ENCODE measurements at regions of chr6 and their contacts with region 1.

Region 1: DNA sequence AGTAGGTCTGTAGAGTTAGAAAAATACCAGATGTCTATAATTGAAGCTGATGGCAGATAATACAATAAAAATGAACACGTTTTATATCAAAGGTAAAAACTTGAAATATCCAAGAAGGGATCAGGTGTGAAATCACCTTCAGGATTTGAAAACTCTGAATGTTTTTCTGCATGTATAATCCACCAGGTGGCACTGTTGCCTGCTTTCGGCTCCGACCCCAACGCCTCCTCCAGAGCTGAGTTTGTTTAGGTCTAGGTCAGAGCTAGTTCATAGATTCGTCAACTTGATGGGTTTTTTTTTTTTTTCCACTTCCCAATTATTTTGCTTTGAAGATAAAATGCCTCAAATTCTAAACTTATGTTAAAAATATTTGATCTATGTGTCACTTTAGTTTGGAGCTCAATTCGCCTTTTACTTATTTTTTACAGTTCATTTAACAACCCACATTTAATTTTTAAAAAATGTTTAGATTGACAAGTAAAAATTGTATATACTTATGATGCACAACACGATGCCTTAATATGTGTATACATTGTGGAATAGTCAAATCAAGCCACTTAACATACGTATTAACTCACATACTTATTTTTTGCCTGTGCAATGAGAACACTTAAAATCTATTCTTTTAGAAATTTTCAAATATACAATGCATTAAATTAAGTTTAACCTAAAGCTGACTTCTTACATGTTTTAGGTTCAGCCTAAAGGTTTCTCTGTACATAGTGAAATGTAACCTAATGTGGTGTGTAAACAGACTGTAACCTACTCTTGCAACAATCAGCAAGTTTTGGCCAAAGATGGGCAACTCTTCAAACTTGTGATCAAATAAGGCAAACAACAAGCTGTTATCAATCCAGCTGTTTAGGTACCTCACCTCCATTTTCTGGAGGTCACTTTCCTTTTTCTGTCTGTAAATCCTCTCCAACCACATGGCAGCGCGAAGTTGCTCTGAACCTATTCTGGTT is 39.4 kb upstream of the ENPP4 start:
- DNase-seq: peak; percentile 34 to 52 (median 47)
- H3K4me3 ChIP-seq: no peak overlapping the region
- H3K4me3 Mint-ChIP-seq: no peak overlapping the region
- H3K27ac ChIP-seq: no peak overlapping the region
- H3K27ac Mint-ChIP-seq: no peak overlapping the region
- H3K4me1 ChIP-seq: no peaks in the 10 kb centered on the region
- H3K4me1 Mint-ChIP-seq: peaks cover 0 to 4% (median 0%) of the 10 kb centered on the region in 4 donors
- H3K27me3 ChIP-seq: no peaks in the 10 kb centered on the region
- H3K27me3 Mint-ChIP-seq: peaks cover 13 to 20% of the 10 kb centered on the region in 2 donors

Region 2: DNA sequence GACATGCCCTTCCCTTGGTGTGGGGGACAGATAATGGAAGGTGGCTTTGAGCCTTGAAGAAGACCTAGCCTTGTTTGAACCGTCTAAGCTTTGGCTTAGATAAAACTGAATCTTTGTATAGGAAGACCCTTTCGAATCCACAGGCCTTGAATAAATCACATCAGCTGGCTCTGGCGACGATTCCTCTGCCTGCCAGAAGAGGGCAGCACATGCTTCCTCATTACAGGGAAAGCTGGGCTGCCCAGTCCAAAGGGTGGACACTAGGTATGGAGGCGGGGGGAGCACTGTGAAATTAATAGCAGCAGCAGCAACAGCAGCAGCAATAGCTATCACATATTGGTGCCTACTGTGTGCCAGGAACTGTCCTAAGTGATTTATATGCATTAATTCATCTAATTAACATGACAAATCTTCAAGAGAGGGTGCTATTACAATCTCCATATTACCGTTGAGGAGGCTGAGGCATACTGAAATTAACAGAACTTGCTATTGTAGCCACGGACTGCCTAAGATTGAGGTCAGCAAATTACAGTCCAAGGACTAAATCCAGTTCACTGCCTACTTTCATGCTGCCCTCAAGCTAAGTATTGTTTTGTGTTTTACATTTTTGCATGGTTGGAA is 159.9 kb before region 1 on chr6:
- CTCF ChIA-PET with region 1: interaction called, 27 read pairs
- POLR2A ChIA-PET with region 1: no interaction called
- intact Hi-C with region 1: loop called (anchors 1 kb)
- DNase-seq: peak; percentile 39 to 50 (median 45)
- H3K4me3 ChIP-seq: no peak overlapping the region
- H3K4me3 Mint-ChIP-seq: no peak overlapping the region
- H3K27ac ChIP-seq: no peak overlapping the region
- H3K27ac Mint-ChIP-seq: peak overlapping the region in 4 of 7 donors; percentile 5 to 46 (median 10)
- H3K4me1 ChIP-seq: no peaks in the 10 kb centered on the region
- H3K4me1 Mint-ChIP-seq: peaks cover 5 to 8% (median 5%) of the 10 kb centered on the region in 4 donors
- H3K27me3 ChIP-seq: no peaks in the 10 kb centered on the region
- H3K27me3 Mint-ChIP-seq: no peaks in the 10 kb centered on the region

Region 3: GRCh38 chr6:45997875-45998506 is 92.4 kb before region 1 on chr6:
- CTCF ChIA-PET with region 1: no interaction called
- POLR2A ChIA-PET with region 1: no interaction called
- intact Hi-C with region 1: no loop called
- DNase-seq: no peak
- H3K4me3 ChIP-seq: no peak overlapping the region
- H3K4me3 Mint-ChIP-seq: no peak overlapping the region
- H3K27ac ChIP-seq: no peak overlapping the region
- H3K27ac Mint-ChIP-seq: peak overlapping the region in 2 of 7 donors; percentile 59 to 64
- H3K4me1 ChIP-seq: no peaks in the 10 kb centered on the region
- H3K4me1 Mint-ChIP-seq: peaks cover 3 to 4% (median 4%) of the 10 kb centered on the region in 4 donors
- H3K27me3 ChIP-seq: no peaks in the 10 kb centered on the region
- H3K27me3 Mint-ChIP-seq: no peaks in the 10 kb centered on the region

Region 4: GRCh38 chr6:46103440-46104115 is 13.2 kb after region 1 on chr6:
- CTCF ChIA-PET with region 1: interaction called, 19 read pairs
- POLR2A ChIA-PET with region 1: no interaction called
- intact Hi-C with region 1: no loop called
- DNase-seq: no peak
- H3K4me3 ChIP-seq: no peak overlapping the region
- H3K4me3 Mint-ChIP-seq: no peak overlapping the region
- H3K27ac ChIP-seq: no peak overlapping the region
- H3K27ac Mint-ChIP-seq: peak overlapping the region in 1 of 7 donors; percentile 38
- H3K4me1 ChIP-seq: no peaks in the 10 kb centered on the region
- H3K4me1 Mint-ChIP-seq: peaks cover 5 to 12% (median 7%) of the 10 kb centered on the region in 4 donors
- H3K27me3 ChIP-seq: no peaks in the 10 kb centered on the region
- H3K27me3 Mint-ChIP-seq: no peaks in the 10 kb centered on the region

Region 5: GRCh38 chr6:46410334-46410953 is 320.0 kb after region 1 on chr6:
- CTCF ChIA-PET with region 1: interaction called, 72 read pairs
- POLR2A ChIA-PET with region 1: no interaction called
- intact Hi-C with region 1: loop called (anchors 1 kb)
- DNase-seq: peak in 4 of 5 donors; percentile 33 to 52 (median 44)
- H3K4me3 ChIP-seq: no peak overlapping the region
- H3K4me3 Mint-ChIP-seq: no peak overlapping the region
- H3K27ac ChIP-seq: no peak overlapping the region
- H3K27ac Mint-ChIP-seq: no peak overlapping the region
- H3K4me1 ChIP-seq: no peaks in the 10 kb centered on the region
- H3K4me1 Mint-ChIP-seq: no peaks in the 10 kb centered on the region
- H3K27me3 ChIP-seq: no peaks in the 10 kb centered on the region
- H3K27me3 Mint-ChIP-seq: peaks cover 0 to 1% of the 10 kb centered on the region in 2 donors

Region 6: GRCh38 chr6:46626228-46626909 is 536.0 kb after region 1 on chr6:
- CTCF ChIA-PET with region 1: interaction called, 14 read pairs
- POLR2A ChIA-PET with region 1: no interaction called
- intact Hi-C with region 1: no loop called
- DNase-seq: peak in 4 of 5 donors; percentile 3 to 29 (median 12)
- H3K4me3 ChIP-seq: no peak overlapping the region
- H3K4me3 Mint-ChIP-seq: peak overlapping the region in 5 of 8 donors; percentile 29 to 70 (median 51)
- H3K27ac ChIP-seq: no peak overlapping the region
- H3K27ac Mint-ChIP-seq: no peak overlapping the region
- H3K4me1 ChIP-seq: peaks cover 3% of the 10 kb centered on the region
- H3K4me1 Mint-ChIP-seq: peaks cover 5 to 11% (median 7%) of the 10 kb centered on the region in 4 donors
- H3K27me3 ChIP-seq: no peaks in the 10 kb centered on the region
- H3K27me3 Mint-ChIP-seq: peaks cover 3% of the 10 kb centered on the region in 2 donors